Activated naive CD4-positive, alpha-beta T cell treated with anti-CD3 and anti-CD28 coated beads, Interleukin-2, amount 10 ng/mL, durations not matched to agents 7 days and 5 days (primary cell): ENCODE measurements at regions of chr17 and their contacts with region 1.

Region 1: DNA sequence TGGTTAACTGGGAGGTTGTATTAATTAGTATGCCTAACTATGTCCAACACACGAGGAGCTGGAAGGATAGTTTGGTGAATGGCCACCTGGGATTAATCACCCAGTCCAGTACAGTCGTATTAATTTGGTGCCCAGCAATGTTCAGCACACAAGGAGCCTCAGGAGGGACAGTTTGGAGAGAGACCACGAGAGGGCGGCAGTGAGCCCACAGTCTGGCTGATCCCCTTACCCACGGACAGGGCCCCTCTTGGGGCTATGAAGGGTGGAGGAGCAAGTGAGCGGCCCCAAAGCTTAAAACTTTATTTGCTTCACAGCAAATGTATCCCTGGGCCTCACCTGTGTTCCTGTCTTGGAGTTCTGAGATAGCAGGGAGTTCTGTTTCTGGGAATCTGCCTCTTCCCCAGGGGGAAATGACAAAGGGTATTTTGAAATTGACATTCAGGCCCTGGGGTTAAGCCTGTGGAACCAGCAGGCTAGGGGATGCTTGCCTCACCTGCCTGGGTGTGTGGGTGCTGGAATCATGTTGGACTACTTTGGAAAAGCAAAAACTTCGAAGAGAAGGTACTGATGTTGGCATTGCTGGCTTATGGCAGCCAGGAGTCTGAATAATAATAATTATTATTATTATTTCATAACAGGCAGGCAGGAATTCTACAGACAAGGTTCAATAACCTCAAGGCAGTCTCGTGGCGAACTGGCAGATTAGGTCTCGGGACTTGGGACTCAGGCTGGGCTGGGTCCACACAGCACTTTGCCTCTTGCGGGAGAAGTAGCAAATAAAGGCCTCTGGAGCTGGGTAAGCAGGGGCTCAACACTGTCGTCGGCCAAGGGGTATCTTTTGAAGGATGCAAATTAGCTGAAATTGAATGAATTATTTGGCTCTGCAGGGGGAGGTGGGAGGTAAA is 227.6 kb upstream of the ASIC2 start:
- DNase-seq: peak; percentile 56
- H3K4me3 Mint-ChIP-seq: no peak overlapping the region
- H3K27ac Mint-ChIP-seq: no peak overlapping the region
- H3K4me1 Mint-ChIP-seq: no peaks in the 10 kb centered on the region
- H3K27me3 Mint-ChIP-seq: no peaks in the 10 kb centered on the region

Region 2: DNA sequence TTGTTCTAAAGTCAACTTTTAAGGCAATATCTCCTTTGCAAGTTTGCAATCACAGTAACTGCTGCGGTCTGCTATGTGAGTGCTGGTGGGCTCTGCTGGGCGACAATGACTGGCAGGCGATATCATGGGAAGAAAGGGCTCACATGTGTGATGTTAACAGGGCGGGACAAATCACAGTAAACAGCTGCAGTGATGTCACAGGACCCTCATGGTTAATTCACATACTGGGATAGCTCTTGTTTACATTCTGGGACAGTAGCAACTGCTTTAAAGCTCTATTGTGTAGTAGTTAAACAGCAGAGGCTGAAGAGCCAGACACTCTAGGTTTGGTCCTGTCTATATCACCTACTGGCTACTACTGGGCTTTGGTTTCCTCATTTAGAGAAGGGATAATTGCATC is 29.6 kb after region 1 on chr17:
- CTCF ChIA-PET with region 1: no interaction called
- DNase-seq: no peak
- H3K4me3 Mint-ChIP-seq: no peak overlapping the region
- H3K27ac Mint-ChIP-seq: no peak overlapping the region
- H3K4me1 Mint-ChIP-seq: no peaks in the 10 kb centered on the region
- H3K27me3 Mint-ChIP-seq: no peaks in the 10 kb centered on the region

Region 3: DNA sequence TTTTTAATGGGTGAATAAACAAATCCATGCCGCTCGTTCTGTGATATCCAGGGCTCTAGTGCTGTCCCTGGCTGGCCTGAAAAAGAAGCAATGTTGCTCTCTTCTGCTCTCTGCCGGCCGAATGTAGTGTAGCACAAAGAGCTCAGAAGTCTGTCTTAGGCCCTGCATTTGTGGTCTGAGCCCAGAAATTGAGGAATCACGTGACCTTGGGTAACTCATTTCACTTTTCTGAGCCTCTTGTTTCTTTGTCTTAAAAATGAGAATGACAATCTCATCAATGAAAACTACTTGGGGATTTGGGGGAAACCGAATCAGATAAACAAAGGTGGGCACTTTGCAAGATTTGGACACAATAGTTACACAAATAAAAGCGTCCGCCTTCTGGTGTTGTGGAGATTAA is 154.0 kb after region 1 on chr17:
- CTCF ChIA-PET with region 1: interaction called, 23 read pairs
- DNase-seq: peak; percentile 70
- H3K4me3 Mint-ChIP-seq: no peak overlapping the region
- H3K27ac Mint-ChIP-seq: no peak overlapping the region
- H3K4me1 Mint-ChIP-seq: no peaks in the 10 kb centered on the region
- H3K27me3 Mint-ChIP-seq: no peaks in the 10 kb centered on the region